Activated CD8-positive, alpha-beta memory T cell treated with anti-CD3 and anti-CD28 coated beads, Interleukin-2, amount 10 ng/mL, durations not matched to agents 7 days and 5 days (primary cell): ENCODE measurements at regions of chr7 and their contacts with region 1.

Region 1: DNA sequence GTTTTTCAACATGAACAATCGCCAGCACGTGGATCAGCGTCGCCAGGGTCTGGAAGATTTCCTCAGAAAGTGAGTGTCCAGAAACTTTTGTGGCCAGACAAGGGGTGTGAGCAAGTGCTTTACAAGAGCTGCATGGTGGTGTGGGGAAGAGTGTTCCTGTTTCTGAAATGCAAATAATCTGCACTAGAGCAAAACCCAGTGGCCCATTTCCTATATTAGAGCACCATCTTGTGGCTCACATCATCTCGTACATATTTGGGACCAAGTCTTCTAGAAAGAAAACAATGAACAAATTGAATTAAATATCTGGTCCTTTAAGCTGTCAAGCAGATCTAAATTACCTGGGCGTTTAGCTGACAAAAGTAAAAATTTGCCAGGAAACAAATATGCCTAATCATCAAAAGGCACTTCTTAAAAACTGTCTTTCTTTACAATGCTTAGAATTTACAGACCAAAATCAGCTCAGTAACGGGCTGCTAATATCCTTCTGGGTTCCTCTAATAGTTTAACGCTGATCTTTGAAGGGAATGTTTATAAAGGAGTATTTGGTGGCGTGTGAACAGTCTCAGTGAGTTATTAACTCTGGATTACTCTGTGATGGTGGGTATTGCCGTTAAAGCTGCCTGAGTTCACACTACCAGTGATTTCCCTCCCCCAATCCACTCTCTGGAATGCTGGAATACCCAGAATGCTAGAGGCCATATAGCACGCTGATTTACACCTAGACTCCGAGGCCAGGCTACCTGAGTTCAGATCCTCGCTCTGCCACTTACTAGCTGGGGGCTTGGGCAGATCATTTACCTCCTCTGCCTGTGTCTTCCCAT is 73.6 kb downstream of the SNX10 start:
- DNase-seq: peak; percentile 68
- ATAC-seq: peak; percentile 76
- H3K4me3 Mint-ChIP-seq: no peak overlapping the region
- H3K27ac Mint-ChIP-seq: no peak overlapping the region
- H3K4me1 Mint-ChIP-seq: peaks cover 20% of the 10 kb centered on the region
- H3K27me3 Mint-ChIP-seq: no peaks in the 10 kb centered on the region

Region 2: DNA sequence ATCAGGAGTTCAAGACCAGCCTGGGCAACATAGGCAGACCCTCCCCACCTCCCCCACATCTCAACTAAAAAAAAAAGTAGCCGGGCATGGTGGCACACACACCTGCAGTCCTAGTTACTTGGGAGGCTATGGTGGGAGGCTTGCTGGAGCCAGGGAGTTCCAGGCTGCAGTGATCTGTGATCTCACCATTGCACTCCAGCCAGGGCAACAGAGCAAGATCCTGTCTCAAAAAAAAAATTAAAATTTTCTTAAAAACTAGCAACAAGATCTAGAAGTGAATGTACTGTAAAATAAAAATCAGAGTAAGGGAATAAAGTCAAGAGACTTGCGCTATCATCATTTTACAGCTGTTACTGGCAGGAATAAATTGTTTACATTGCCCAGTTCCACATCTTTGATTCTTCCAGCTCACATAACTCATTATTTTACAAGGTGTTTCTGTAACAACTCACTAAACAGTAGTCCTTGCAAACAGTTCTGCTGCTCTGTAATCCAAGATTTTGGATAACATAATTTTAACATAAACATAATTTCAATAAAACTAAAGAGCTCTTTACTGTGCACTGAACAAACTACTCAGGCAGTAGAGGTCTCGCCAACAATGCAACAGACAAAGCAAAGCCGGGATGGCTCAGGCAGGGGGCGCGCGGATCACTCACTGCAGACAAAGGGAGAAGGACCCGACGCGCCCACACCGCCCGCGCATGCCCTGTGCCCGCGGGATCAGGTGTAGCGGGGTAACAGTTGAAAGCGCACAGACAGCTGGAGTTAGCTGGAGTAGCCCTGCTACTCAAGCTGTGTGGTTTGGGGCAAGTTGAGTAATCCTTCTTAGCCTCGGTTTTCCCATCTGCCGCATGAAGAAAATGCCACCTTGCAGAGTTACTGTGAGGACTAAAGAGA is 286.6 kb before region 1 on chr7:
- CTCF ChIA-PET with region 1: interaction called, 16 read pairs
- DNase-seq: peak; percentile 85
- ATAC-seq: peak; percentile 99
- H3K4me3 Mint-ChIP-seq: no peak overlapping the region
- H3K27ac Mint-ChIP-seq: no peak overlapping the region
- H3K4me1 Mint-ChIP-seq: peaks cover 8% of the 10 kb centered on the region
- H3K27me3 Mint-ChIP-seq: peaks cover 73% of the 10 kb centered on the region

Region 3: DNA sequence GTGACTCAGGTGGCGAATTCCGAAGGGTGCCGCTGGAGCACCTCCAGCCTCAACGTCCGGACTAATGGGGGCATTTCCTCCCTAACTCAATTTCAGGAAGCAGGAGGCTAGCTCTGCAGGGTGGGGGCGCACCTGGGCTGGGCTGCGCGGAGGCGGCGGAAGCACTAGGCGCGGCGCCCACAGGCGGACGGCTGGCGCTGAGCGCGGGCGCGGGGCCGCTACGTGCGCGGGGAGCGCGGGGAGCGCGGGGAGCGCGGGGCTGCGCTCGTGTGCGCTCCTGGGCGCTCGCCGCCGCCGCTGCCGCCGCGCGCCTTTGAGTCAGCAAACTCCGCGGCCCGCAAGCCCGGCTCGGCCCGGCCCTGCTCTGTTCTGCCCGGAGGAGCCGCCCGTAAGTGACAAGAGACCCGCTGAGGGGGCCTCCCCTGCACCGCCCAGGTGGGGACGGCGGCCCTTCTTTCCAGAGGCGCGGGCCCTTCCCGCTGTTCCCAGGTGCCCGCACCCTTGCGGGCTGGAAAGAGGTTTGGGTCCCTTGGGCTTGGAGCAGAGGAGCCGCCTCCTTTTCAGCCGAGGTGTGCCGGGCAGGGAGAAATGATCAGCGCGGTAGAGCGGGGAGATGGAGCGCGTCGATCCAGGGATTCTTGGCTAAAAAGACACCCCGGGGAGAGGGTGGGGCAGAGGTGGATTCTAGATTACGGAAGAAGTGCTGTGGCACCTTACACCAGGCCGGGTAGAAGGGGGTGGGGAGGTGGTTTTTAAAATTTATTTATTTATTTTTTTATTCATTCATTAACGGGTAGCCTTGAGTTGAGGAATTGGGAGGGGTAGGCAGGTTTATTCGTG is 73.4 kb before region 1 on chr7 and contains the start of gene SNX10:
- CTCF ChIA-PET with region 1: interaction called, 23 read pairs
- DNase-seq: peak; percentile 86
- ATAC-seq: peak; percentile 79
- H3K4me3 Mint-ChIP-seq: peak within 1 kb of the TSS; percentile 83
- H3K27ac Mint-ChIP-seq: peak within 1 kb of the TSS; percentile 88
- H3K4me1 Mint-ChIP-seq: peaks cover 41% of the 10 kb centered on the region
- H3K27me3 Mint-ChIP-seq: no peaks in the 10 kb centered on the region
- total RNA-seq, gene SNX10: 42.8 to 59.3 TPM

Region 4: GRCh38 chr7:26337232-26337865 is 27.9 kb before region 1 on chr7:
- CTCF ChIA-PET with region 1: no interaction called
- DNase-seq: no peak
- ATAC-seq: no peak
- H3K4me3 Mint-ChIP-seq: no peak overlapping the region
- H3K27ac Mint-ChIP-seq: no peak overlapping the region
- H3K4me1 Mint-ChIP-seq: peaks cover 20% of the 10 kb centered on the region
- H3K27me3 Mint-ChIP-seq: no peaks in the 10 kb centered on the region

Region 5: GRCh38 chr7:26376175-26376917 is 11.1 kb after region 1 on chr7:
- CTCF ChIA-PET with region 1: interaction called, 11 read pairs
- DNase-seq: peak; percentile 59
- ATAC-seq: peak; percentile 54
- H3K4me3 Mint-ChIP-seq: peak overlapping the region; percentile 77
- H3K27ac Mint-ChIP-seq: peak overlapping the region; percentile 59
- H3K4me1 Mint-ChIP-seq: peaks cover 5% of the 10 kb centered on the region
- H3K27me3 Mint-ChIP-seq: peaks cover 24% of the 10 kb centered on the region

Region 6: GRCh38 chr7:26667500-26668133 is 302.3 kb after region 1 on chr7:
- CTCF ChIA-PET with region 1: interaction called, 26 read pairs
- DNase-seq: peak; percentile 75
- ATAC-seq: peak; percentile 76
- H3K4me3 Mint-ChIP-seq: no peak overlapping the region
- H3K27ac Mint-ChIP-seq: no peak overlapping the region
- H3K4me1 Mint-ChIP-seq: peaks cover 16% of the 10 kb centered on the region
- H3K27me3 Mint-ChIP-seq: peaks cover 8% of the 10 kb centered on the region

Region 7: GRCh38 chr7:27160546-27161213 is 795.4 kb after region 1 on chr7:
- CTCF ChIA-PET with region 1: interaction called, 20 read pairs
- DNase-seq: peak; percentile 85
- ATAC-seq: peak; percentile 74
- H3K4me3 Mint-ChIP-seq: peak overlapping the region; percentile 57
- H3K27ac Mint-ChIP-seq: no peak overlapping the region
- H3K4me1 Mint-ChIP-seq: peaks cover 8% of the 10 kb centered on the region
- H3K27me3 Mint-ChIP-seq: peaks cover 85% of the 10 kb centered on the region